ENCODE measurements at regions of chr1 and their contacts with region 1.

Region 1: GRCh38 chr1:31705080-31705866 is 1.5 kb upstream of the COL16A1 start:
- DNase-seq: peak; percentile 39 to 67 (median 46)
- H3K4me3 ChIP-seq: no peak overlapping the region
- H3K4me3 Mint-ChIP-seq: peak overlapping the region in 6 of 8 donors; percentile 12 to 63 (median 41)
- H3K27ac ChIP-seq: no peak overlapping the region
- H3K27ac Mint-ChIP-seq: peak overlapping the region in 2 of 7 donors; percentile 33 to 53
- H3K4me1 ChIP-seq: peaks cover 24% of the 10 kb centered on the region
- H3K4me1 Mint-ChIP-seq: peaks cover 24 to 62% (median 29%) of the 10 kb centered on the region in 4 donors
- H3K27me3 ChIP-seq: peaks cover 5% of the 10 kb centered on the region
- H3K27me3 Mint-ChIP-seq: peaks cover 29 to 32% of the 10 kb centered on the region in 2 donors

Region 2: GRCh38 chr1:31663622-31664452 is 41.4 kb before region 1 on chr1:
- CTCF ChIA-PET with region 1: interaction called, 3 read pairs
- POLR2A ChIA-PET with region 1: no interaction called
- intact Hi-C with region 1: loop called (anchors 1 kb)
- DNase-seq: peak; percentile 36 to 56 (median 39)
- H3K4me3 ChIP-seq: no peak overlapping the region
- H3K4me3 Mint-ChIP-seq: no peak overlapping the region
- H3K27ac ChIP-seq: no peak overlapping the region
- H3K27ac Mint-ChIP-seq: no peak overlapping the region
- H3K4me1 ChIP-seq: no peaks in the 10 kb centered on the region
- H3K4me1 Mint-ChIP-seq: no peaks in the 10 kb centered on the region
- H3K27me3 ChIP-seq: no peaks in the 10 kb centered on the region
- H3K27me3 Mint-ChIP-seq: peaks cover 4 to 7% of the 10 kb centered on the region in 2 donors

Region 3: GRCh38 chr1:31904339-31905092 is 199.2 kb after region 1 on chr1:
- CTCF ChIA-PET with region 1: no interaction called
- POLR2A ChIA-PET with region 1: no interaction called
- intact Hi-C with region 1: no loop called
- DNase-seq: no peak
- H3K4me3 ChIP-seq: no peak overlapping the region
- H3K4me3 Mint-ChIP-seq: no peak overlapping the region
- H3K27ac ChIP-seq: no peak overlapping the region
- H3K27ac Mint-ChIP-seq: peak overlapping the region in 4 of 7 donors; percentile 18 to 68 (median 30)
- H3K4me1 ChIP-seq: no peaks in the 10 kb centered on the region
- H3K4me1 Mint-ChIP-seq: peaks cover 7 to 19% (median 14%) of the 10 kb centered on the region in 4 donors
- H3K27me3 ChIP-seq: no peaks in the 10 kb centered on the region
- H3K27me3 Mint-ChIP-seq: no peaks in the 10 kb centered on the region

Measured in CD4-positive, alpha-beta memory T cell (primary cell).